AG04449 (cell line): ENCODE measurements at regions of chr6 and their contacts with region 1.

Region 1: GRCh38 chr6:124870611-124871459 is 91.4 kb upstream of the RNF217 start:
- DNase-seq: no peak
- H3K4me3 ChIP-seq: no peak overlapping the region
- CTCF ChIP-seq: peak; percentile 49

Region 2: GRCh38 chr6:124881898-124882579 is 11.2 kb after region 1 on chr6:
- CTCF ChIA-PET with region 1: interaction called, 20 read pairs
- POLR2A ChIA-PET with region 1: no interaction called
- DNase-seq: no peak
- H3K4me3 ChIP-seq: no peak overlapping the region
- CTCF ChIP-seq: no peak

Region 3: DNA sequence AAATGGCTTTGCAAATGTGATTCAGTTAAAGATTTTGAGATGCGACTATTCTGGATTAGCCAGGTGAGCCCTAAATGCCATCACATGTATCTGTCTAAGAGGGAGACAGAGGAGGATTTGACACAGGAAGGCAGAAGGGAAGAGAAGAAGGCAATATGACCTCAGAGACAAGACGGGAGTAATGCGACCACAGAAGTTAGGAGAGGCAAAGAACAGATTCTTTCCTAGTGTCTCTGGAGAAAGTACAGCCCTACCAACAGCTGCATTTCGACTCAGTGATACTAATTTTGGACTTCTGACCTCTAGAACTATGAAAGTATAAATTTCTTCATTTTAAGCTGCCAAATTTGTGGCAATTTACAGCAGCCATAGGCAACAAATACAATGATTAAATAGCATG is 258.5 kb after region 1 on chr6:
- CTCF ChIA-PET with region 1: interaction called, 13 read pairs
- POLR2A ChIA-PET with region 1: no interaction called
- DNase-seq: no peak
- H3K4me3 ChIP-seq: no peak overlapping the region
- CTCF ChIP-seq: no peak